MCF 10A (cell line): ENCODE measurements at regions of chr12 and their contacts with region 1.

Region 1: DNA sequence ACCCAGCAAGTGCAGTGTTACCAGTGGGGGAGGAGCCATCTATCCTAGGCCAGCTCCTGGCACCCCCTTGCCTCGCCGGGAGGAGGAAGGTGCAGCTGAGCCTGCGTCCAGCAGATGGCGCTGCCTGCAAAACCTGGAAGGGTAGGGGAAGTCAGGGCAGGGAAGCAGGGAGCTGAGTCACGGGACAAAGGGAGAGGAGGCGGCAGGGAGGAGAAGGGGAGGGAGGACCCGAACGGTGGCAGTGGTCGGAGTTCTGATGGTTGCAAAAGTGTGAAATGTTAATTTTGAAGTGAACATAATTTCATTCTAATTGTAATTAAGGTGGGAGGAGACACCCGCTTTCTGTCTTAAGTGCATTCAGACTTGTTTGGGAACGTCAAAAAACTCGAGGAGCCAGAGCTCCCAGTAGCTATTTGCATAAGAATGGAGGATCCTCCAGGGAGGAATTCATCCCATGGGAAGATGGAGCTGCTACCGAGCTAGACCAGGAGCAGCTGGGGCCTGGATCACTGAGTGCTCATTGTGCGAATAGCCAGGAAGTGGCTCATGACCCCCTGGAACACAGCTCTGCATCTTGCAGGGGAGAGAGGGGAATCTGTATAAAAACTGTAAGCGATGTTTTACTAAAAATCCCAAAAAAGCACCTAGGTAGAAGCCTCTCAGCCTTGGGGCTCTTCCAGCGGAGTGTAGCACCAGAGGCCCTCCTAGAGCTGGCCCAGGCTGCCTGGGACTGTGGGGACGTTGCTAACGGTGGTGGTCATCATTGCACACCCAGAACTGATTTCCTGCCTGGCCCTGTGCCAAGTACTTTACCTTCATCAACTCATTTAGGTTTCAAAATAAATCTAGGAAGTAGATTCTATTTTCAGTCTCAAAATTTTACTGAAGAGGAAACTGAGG is 59.5 kb downstream of the EMP1 start:
- DNase-seq: peak; percentile 96
- H3K4me3 Mint-ChIP-seq: peak overlapping the region; percentile 68
- H3K27ac Mint-ChIP-seq: peak overlapping the region; percentile 75
- H3K4me1 Mint-ChIP-seq: peaks cover 6% of the 10 kb centered on the region
- H3K27me3 Mint-ChIP-seq: no peaks in the 10 kb centered on the region
- CTCF ChIP-seq: peak; percentile 89

Region 2: DNA sequence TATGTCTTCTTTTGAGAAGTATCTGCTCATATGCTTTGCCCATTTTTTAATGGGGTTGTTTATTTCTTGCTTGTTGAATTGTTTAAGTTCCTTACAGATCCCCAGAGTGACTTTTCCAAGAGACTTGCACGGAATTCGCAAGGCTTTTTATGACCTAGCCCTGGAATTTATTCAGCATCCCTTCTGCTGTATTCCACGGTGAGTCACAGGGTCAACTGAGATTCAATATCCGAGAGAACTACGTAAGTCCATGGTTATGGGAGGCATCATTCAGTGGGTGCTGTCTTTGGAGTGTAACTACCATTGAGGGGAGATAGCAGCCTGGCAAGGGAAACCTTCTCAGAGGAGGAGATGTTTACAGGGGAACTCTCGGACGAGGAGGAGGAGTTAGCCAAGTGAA is 385.6 kb before region 1 on chr12:
- CTCF ChIA-PET with region 1: no interaction called
- POLR2A ChIA-PET with region 1: no interaction called
- intact Hi-C with region 1: no loop called
- DNase-seq: peak; percentile 58
- H3K4me3 Mint-ChIP-seq: no peak overlapping the region
- H3K27ac Mint-ChIP-seq: peak overlapping the region; percentile 11
- H3K4me1 Mint-ChIP-seq: peaks cover 28% of the 10 kb centered on the region
- H3K27me3 Mint-ChIP-seq: no peaks in the 10 kb centered on the region
- CTCF ChIP-seq: no peak

Region 3: DNA sequence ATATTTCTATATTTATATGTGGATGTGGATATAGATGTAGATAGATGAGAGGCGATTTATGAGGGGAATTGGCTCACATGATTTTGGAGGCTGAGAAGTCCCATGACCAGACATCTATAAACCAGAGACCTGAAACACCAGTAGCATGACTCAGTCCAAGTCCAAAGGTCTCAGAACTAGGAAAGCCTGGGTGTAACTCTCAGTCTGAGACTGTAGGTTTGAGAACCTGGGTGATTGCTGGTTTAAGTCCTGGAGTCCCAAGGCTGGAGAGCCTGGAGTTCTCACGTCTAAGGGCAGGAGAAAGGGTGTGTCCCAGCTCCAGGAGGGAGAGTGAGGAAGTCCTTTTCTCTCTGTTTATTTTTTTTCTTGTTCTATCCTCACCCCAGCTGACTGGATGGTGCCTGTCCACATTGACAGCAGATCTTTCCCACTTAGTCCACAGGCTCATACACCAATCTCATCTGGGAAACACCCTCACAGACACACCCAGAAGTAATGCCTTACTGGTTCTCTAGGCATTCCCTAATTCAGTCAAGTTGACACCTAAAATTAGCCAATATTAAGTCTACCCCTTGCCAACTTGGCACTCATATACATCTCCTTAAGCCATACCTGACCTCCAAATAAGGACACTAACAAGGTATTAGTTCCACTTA is 14.1 kb before region 1 on chr12:
- CTCF ChIA-PET with region 1: interaction called, 38 read pairs
- POLR2A ChIA-PET with region 1: no interaction called
- intact Hi-C with region 1: no loop called
- DNase-seq: no peak
- H3K4me3 Mint-ChIP-seq: no peak overlapping the region
- H3K27ac Mint-ChIP-seq: no peak overlapping the region
- H3K4me1 Mint-ChIP-seq: peaks cover 7% of the 10 kb centered on the region
- H3K27me3 Mint-ChIP-seq: no peaks in the 10 kb centered on the region
- CTCF ChIP-seq: no peak

Region 4: DNA sequence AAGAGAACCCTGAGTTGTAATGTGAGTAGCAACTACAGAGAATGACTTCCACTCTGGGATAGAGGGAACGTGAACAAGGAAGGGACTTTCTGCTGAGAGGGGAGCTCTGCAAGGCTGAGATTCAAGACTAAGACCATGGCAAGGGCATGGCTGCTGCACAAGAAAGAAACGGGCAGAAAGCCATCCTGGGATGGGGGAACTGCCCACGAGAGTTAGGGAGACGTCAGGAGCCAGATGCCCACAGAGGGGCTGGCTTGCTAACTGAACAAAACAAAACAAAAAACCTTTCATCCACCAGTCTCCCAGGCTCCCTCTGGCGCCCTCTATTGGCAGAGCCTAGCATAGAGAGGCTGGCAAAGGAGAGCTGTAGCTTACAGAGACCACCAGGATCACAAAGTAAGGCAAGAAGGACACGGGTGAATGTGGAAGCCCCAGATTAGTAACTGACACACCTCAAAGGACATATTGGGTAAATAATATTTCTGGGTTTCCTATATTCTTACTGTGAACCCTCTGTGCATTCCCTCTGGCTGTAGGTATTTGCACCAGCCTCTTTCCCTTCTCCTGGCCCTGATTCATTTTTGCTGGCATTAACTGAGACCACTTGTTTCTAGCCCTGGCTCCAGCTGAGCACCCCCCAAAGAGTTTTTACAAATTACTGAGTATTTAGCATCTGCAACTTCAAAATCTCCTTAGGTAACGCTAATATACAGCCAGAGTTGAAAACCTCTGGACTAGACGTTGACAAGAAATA is 278.8 kb after region 1 on chr12:
- CTCF ChIA-PET with region 1: interaction called, 35 read pairs
- POLR2A ChIA-PET with region 1: no interaction called
- intact Hi-C with region 1: loop called (anchors 5 kb)
- DNase-seq: peak; percentile 75
- H3K4me3 Mint-ChIP-seq: no peak overlapping the region
- H3K27ac Mint-ChIP-seq: no peak overlapping the region
- H3K4me1 Mint-ChIP-seq: no peaks in the 10 kb centered on the region
- H3K27me3 Mint-ChIP-seq: peaks cover 27% of the 10 kb centered on the region
- CTCF ChIP-seq: peak; percentile 86

Region 5: DNA sequence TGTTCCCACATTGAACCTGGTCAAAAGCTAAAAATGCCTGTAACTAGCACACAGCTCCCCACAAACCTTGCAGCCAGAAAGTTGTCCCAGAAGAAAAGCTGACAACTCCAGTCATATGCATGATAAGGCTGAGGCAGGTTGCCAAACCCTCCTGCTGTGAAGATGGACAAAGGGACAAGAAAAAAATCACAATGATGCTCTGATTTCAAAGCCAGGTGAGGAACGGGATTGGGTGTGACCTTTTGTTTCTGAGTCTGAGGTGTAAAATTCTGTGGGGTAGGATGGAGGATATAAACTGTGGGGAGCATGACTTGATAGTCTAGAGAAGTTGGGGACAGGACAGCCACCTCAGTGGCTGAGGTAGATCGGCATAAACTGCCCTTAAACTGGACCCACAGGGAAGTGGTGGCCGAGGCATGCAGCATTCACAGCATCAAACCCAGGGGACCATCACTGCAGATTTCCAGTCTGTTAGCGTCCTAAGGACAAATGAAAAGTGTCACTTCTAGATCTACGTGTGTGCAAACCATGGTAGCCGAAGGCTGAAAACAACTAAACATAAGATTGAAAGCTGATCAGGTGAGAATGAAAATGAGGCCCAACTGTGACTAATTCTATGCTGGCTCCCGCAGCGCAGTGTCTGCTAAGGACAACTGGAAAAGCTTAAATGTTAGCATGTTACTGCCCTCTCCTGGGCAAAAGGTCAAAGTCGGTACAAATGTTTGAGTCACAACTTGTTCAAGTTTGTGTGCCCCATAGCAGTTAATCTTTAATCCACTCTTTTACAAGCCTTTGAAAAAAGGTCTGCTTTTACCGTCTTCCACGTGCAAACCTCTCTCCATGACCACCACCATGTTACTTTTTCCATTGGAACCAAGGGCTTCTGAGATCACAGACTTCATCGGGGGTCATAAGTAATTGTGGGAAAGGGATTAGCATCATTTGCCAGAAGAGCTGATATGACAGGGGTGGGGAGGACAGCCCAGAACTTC is 685.5 kb after region 1 on chr12:
- CTCF ChIA-PET with region 1: interaction called, 21 read pairs
- POLR2A ChIA-PET with region 1: interaction called, 5 read pairs
- intact Hi-C with region 1: no loop called
- DNase-seq: peak; percentile 80
- H3K4me3 Mint-ChIP-seq: no peak overlapping the region
- H3K27ac Mint-ChIP-seq: no peak overlapping the region
- H3K4me1 Mint-ChIP-seq: no peaks in the 10 kb centered on the region
- H3K27me3 Mint-ChIP-seq: no peaks in the 10 kb centered on the region
- CTCF ChIP-seq: peak; percentile 41